ENCODE measurements at regions of chr16 and their contacts with region 1.

Region 1: DNA sequence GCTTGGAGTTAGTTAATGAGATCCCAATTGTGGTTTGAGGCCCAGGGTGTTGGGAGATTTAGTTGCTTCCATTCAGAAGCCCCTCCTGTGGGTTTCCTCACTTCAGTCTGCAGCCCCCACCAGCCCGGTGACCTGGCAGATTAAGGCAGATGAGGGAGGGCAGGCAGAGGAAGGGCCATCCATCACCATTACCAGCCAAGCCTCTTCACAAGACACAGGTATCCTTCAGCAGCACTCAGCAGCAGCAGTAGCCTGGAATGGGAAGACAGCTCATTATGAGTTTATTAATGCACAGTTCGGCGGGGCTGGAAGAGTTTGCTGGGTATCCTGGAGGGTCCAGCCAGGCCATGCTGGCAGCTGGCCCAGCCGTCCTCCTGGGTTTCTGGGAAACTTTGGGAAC is 90.0 kb upstream of the GPRC5B start:
- DNase-seq: no peak
- H3K4me3 ChIP-seq: no peak overlapping the region
- H3K4me1 ChIP-seq: no peaks in the 10 kb centered on the region
- H3K27me3 ChIP-seq: no peaks in the 10 kb centered on the region

Region 2: GRCh38 chr16:20029611-20030010 is 55.0 kb after region 1 on chr16:
- in situ Hi-C with region 1: loop called (anchors 10 kb)
- DNase-seq: no peak
- H3K4me3 ChIP-seq: no peak overlapping the region
- H3K4me1 ChIP-seq: no peaks in the 10 kb centered on the region
- H3K27me3 ChIP-seq: no peaks in the 10 kb centered on the region